ENCODE measurements at regions of chr19 and their contacts with region 1.

Region 1: DNA sequence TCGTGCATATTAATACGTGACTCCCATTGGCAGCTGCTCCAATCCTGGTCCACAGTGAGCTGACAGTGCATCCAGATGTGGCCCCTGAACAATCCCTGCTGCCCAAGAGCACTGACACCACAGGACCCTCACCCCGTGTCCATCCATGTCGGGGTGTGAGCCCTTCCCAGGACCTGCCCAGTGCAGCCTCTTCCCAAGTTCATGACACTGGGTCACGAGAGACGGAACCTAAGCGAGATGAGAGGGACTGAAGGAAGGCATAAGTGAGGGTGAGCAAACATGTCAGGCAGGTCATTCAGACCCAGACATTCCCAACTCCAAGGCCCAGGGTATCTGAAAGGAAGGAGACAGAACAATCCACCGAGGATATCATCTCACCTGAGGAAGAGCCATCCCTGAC is 3.5 kb downstream of the ZNF468 start:
- DNase-seq: no peak
- H3K4me3 ChIP-seq: no peak overlapping the region
- H3K27ac ChIP-seq: no peak overlapping the region
- H3K4me1 ChIP-seq: peaks cover 0 to 3% of the 10 kb centered on the region in 2 donors
- H3K27me3 ChIP-seq: no peaks in the 10 kb centered on the region
- CTCF ChIP-seq: no peak

Region 2: DNA sequence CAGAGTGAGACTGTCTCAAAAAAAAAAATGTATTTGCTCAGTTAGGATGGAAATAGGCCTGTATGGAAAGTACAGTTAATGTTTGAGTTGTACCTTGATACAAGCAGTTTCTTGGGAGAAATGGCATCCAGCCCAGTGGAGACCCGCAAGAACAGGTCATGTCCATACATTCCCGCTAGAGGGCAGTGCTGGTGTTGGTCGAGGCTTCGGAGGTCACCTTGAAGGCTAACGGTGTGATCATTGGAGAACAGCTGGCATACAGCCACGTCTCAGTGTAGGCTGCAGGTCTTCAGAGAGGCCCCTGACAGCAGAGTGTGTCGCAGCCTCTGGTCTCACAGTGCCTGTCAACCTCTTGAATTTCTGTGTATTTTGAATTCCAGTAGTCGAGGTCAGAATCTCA is 510.3 kb before region 1 on chr19:
- intact Hi-C with region 1: no loop called
- DNase-seq: peak in 1 of 2 donors; percentile 67
- H3K4me3 ChIP-seq: no peak overlapping the region
- H3K27ac ChIP-seq: no peak overlapping the region
- H3K4me1 ChIP-seq: no peaks in the 10 kb centered on the region
- H3K27me3 ChIP-seq: no peaks in the 10 kb centered on the region
- CTCF ChIP-seq: peak; percentile 28 to 52 (median 34)

Region 3: DNA sequence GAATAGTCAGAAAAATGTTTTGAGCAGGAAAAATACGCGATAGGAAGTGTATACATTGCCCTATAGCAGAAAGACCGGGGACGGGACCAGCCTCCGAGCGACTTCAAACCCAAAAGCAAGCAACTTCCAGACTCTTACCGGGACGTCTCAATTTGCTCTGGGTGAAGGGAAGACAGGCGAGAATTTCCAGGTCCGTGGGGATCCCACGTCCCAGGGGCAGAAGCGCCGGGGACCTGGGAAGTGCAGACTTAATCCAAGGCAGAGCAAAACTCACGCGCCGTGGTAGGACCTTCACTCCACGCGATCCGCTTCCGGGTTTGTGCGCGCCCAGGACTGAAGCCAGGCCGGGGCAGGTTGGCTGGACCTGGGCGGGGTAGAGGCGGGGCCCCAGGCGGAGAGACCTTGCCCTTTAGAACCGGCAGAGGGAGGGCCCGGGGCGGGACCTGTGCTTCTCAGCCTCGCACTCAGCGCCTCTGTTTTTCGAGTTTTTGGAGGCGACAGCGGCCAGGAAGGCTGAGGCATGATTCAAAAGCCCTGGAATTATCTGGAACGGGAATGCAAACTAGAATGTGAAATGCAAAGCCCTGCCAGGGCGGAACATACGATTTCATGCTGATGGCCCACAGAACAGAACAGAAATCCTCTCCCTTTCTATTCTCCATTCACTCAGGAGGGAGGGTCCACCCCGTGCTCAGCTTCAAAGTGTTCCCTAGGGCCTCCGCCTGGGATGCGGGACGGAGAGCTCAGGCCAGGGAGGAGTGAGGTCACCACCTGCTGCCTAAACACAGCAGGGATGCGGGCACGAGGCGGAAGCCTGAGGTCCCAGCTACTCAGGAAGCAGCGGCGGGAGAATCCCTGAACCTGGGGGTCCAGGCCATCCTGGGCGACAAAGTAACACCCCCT is 67.2 kb before region 1 on chr19 and contains the start of gene ZNF600:
- intact Hi-C with region 1: loop called (anchors 5 kb)
- DNase-seq: peak; percentile 77 to 95
- H3K4me3 ChIP-seq: peak within 1 kb of the TSS; percentile 48 to 84
- H3K27ac ChIP-seq: peak within 1 kb of the TSS; percentile 79 to 85
- H3K4me1 ChIP-seq: no peaks in the 10 kb centered on the region
- H3K27me3 ChIP-seq: no peaks in the 10 kb centered on the region
- CTCF ChIP-seq: peak; percentile 19 to 40 (median 38)
- total RNA-seq, gene ZNF600: 4.8 TPM

Region 4: DNA sequence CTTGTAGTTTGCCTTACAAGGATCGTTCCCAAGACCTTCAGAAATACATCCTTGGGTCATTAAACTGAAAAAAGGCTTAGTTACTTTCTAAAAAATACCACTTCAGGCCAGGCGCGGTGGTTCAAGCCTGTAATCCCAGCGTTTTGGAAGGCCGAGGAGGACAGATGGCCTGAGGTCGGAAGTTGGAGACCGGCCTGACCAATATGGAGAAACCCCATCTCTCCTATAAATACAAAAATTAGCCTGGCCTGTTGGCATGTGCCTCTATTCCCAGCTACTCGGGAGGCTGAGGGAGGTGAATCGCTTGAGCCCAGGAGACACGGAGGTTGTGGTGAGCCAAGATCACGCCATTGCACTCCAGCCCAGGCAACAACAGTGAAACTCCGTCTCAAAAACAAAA is 30.2 kb before region 1 on chr19:
- intact Hi-C with region 1: loop called (anchors 5 kb)
- DNase-seq: no peak
- H3K4me3 ChIP-seq: no peak overlapping the region
- H3K27ac ChIP-seq: no peak overlapping the region
- H3K4me1 ChIP-seq: peaks cover 0 to 3% of the 10 kb centered on the region in 2 donors
- H3K27me3 ChIP-seq: no peaks in the 10 kb centered on the region
- CTCF ChIP-seq: no peak

Measured in ascending aorta (tissue), 2 donors.